ENCODE measurements at regions of chr5 and their contacts with region 1.

Region 1: GRCh38 chr5:91383027-91383955 is at the start of gene ARRDC3:
- DNase-seq: peak; percentile 97 to 99
- ATAC-seq: peak; percentile 87
- H3K4me3 ChIP-seq: peak within 1 kb of the TSS; percentile 91 to 94
- H3K27ac ChIP-seq: peak within 1 kb of the TSS; percentile 78 to 93
- H3K4me1 ChIP-seq: no peaks in the 10 kb centered on the region
- H3K27me3 ChIP-seq: no peaks in the 10 kb centered on the region
- total RNA-seq, gene ARRDC3: 45.6 to 72.2 TPM

Region 2: GRCh38 chr5:90932052-90932699 is 451.1 kb before region 1 on chr5:
- intact Hi-C with region 1: loop called (anchors 2 to 5 kb)
- DNase-seq: no peak
- ATAC-seq: peak; percentile 83
- H3K4me3 ChIP-seq: no peak overlapping the region
- H3K27ac ChIP-seq: no peak overlapping the region
- H3K4me1 ChIP-seq: no peaks in the 10 kb centered on the region
- H3K27me3 ChIP-seq: no peaks in the 10 kb centered on the region

Region 3: GRCh38 chr5:91101600-91102379 is 281.5 kb before region 1 on chr5:
- intact Hi-C with region 1: loop called (anchors 2 kb)
- DNase-seq: peak; percentile 81
- ATAC-seq: peak; percentile 95
- H3K4me3 ChIP-seq: no peak overlapping the region
- H3K27ac ChIP-seq: no peak overlapping the region
- H3K4me1 ChIP-seq: no peaks in the 10 kb centered on the region
- H3K27me3 ChIP-seq: no peaks in the 10 kb centered on the region

Region 4: GRCh38 chr5:91219803-91220371 is 163.4 kb before region 1 on chr5:
- intact Hi-C with region 1: loop called (anchors 5 to 10 kb)
- DNase-seq: no peak
- ATAC-seq: no peak
- H3K4me3 ChIP-seq: no peak overlapping the region
- H3K27ac ChIP-seq: no peak overlapping the region
- H3K4me1 ChIP-seq: no peaks in the 10 kb centered on the region
- H3K27me3 ChIP-seq: no peaks in the 10 kb centered on the region

Region 5: GRCh38 chr5:91280362-91281269 is 102.7 kb before region 1 on chr5:
- intact Hi-C with region 1: loop called (anchors 1 to 5 kb)
- DNase-seq: peak; percentile 97 to 99
- ATAC-seq: peak; percentile 99
- H3K4me3 ChIP-seq: peak overlapping the region; percentile 37 to 76
- H3K27ac ChIP-seq: peak overlapping the region; percentile 23 to 97
- H3K4me1 ChIP-seq: no peaks in the 10 kb centered on the region
- H3K27me3 ChIP-seq: no peaks in the 10 kb centered on the region

Region 6: GRCh38 chr5:91361055-91361701 is 22.1 kb before region 1 on chr5:
- intact Hi-C with region 1: no loop called
- DNase-seq: no peak
- ATAC-seq: no peak
- H3K4me3 ChIP-seq: no peak overlapping the region
- H3K27ac ChIP-seq: no peak overlapping the region
- H3K4me1 ChIP-seq: no peaks in the 10 kb centered on the region
- H3K27me3 ChIP-seq: no peaks in the 10 kb centered on the region

Region 7: DNA sequence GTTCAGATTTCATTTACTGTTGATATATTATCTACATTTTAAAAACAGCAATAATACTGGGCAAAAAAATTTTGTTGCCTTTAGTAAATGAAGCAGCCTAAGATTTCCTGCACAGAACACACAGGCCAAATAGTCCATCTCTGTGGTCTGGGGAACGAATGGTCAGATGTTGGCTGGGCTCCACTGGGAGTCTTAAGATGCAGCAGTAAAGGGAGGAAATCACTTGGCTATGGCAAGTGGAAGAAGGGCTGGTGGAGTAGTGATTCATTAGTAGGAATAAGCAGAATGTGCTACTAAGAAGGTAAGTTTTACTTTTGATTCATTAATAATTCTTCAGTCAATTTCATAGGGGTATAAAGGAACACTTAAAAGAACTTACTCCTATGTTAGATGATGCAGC is 90.9 kb after region 1 on chr5:
- intact Hi-C with region 1: no loop called
- DNase-seq: no peak
- ATAC-seq: no peak
- H3K4me3 ChIP-seq: no peak overlapping the region
- H3K27ac ChIP-seq: no peak overlapping the region
- H3K4me1 ChIP-seq: peaks cover 0 to 3% of the 10 kb centered on the region in 2 donors
- H3K27me3 ChIP-seq: no peaks in the 10 kb centered on the region